Activated B cell treated with CpG ODN at 0.5 μM for 24 hours (primary cell): ENCODE measurements at regions of chr10 and their contacts with region 1.

Region 1: DNA sequence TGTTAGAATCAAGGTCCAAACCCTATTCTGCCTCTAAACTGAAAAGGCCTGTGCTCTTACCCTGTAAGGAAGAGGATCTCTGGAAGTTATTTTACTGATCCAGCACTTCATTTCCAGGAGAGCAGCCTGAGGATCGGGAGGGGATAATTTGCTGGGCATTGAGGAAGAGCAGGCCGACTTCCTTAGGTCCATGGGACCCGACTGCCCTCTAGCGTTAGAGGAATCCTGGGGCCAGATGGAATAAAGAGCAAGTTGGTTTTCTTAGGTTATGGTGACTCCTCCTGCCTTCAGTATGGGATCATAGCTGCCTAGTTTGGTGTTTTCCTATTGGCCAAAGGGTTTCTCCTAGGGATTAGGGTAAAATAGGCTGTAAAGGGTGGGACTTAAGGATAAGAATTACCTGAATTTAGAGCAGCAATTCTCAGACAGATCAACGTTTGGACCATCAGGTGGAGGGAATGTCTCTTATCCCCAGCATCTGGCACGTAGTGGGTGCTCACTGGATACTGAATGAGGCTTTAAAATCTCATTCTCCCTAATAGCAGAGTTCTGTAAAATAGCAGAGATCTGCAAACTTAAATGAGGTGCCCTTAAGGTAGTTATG is 40.0 kb upstream of the SORBS1 start:
- DNase-seq: no peak
- ATAC-seq: no peak
- H3K4me3 Mint-ChIP-seq: no peak overlapping the region
- H3K27ac Mint-ChIP-seq: no peak overlapping the region
- H3K4me1 Mint-ChIP-seq: no peaks in the 10 kb centered on the region
- H3K27me3 Mint-ChIP-seq: peaks cover 1% of the 10 kb centered on the region
- CTCF ChIP-seq: no peak

Region 2: GRCh38 chr10:94630017-94630688 is 971.1 kb before region 1 on chr10:
- CTCF ChIA-PET with region 1: no interaction called
- POLR2A ChIA-PET with region 1: no interaction called
- intact Hi-C with region 1: loop called (anchors 2 kb)
- DNase-seq: no peak
- ATAC-seq: no peak
- H3K4me3 Mint-ChIP-seq: no peak overlapping the region
- H3K27ac Mint-ChIP-seq: no peak overlapping the region
- H3K4me1 Mint-ChIP-seq: no peaks in the 10 kb centered on the region
- H3K27me3 Mint-ChIP-seq: no peaks in the 10 kb centered on the region
- CTCF ChIP-seq: peak; percentile 77

Region 3: DNA sequence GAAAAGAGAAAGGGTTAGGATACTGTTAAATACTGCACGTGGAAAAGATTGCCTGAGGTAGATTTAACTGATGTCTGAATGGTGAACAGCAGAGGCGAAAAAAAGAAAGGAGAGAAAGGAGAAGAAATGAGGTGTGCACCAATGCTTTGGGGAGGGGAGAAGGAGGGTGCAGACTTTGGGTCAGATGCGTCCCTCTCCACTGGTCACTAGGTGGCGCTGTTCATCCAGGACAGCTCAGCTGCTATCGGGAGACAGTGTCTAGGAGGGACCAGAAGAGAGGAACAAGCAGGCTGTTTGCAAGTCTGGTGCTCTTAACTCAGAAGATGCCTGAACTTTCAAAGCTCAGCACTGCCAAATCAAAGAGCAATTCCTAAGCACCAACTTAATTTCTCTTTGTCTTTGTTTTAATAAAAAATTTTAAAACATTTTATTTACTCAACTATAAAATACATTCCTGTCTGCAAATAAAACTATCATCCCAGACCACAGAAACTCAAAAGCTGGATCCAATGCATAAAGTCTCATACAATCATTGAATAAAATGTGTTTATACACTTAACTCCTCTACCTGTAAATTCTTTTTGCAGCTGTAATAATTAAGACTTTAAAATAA is 226.5 kb before region 1 on chr10:
- CTCF ChIA-PET with region 1: no interaction called
- POLR2A ChIA-PET with region 1: no interaction called
- intact Hi-C with region 1: loop called (anchors 1 kb)
- DNase-seq: no peak
- ATAC-seq: peak; percentile 64
- H3K4me3 Mint-ChIP-seq: no peak overlapping the region
- H3K27ac Mint-ChIP-seq: no peak overlapping the region
- H3K4me1 Mint-ChIP-seq: no peaks in the 10 kb centered on the region
- H3K27me3 Mint-ChIP-seq: peaks cover 38% of the 10 kb centered on the region
- CTCF ChIP-seq: no peak

Region 4: DNA sequence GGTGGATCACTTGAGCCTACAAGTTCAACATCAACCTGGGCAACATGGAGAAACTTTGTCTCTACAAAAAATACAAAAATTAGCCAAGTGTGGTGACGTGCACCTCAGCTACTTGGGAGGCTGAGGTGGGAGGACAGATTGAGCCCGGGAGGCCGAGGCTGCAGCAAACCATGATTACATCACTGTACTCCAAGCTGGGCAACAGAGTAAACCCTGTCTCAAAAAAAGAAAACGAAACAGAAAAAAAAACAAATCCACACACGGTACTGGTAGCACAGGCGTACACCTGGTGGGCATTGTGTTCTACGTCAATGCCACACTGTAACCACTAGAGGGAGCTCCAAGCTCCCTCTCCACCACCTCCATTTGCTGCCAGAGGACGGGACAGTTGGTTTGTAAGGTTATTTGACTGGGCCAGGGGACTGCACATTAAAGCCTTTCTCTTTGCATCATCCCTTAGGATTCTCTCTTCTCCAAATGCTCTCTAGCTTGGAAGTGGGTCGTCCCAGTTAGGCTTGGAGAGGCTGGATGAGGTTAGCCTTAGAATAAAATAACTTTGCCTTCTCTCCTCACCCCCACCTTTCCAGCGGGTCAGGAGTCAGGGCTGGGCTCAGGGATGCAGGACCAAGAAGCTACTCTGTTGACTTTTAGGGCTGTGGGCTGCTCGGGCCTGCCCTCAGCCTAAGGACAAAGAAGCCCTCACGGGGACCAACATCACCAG is 170.8 kb before region 1 on chr10:
- CTCF ChIA-PET with region 1: interaction called, 19 read pairs
- POLR2A ChIA-PET with region 1: no interaction called
- intact Hi-C with region 1: loop called (anchors 1 kb)
- DNase-seq: peak; percentile 24
- ATAC-seq: peak; percentile 93
- H3K4me3 Mint-ChIP-seq: no peak overlapping the region
- H3K27ac Mint-ChIP-seq: no peak overlapping the region
- H3K4me1 Mint-ChIP-seq: no peaks in the 10 kb centered on the region
- H3K27me3 Mint-ChIP-seq: peaks cover 9% of the 10 kb centered on the region
- CTCF ChIP-seq: no peak

Region 5: DNA sequence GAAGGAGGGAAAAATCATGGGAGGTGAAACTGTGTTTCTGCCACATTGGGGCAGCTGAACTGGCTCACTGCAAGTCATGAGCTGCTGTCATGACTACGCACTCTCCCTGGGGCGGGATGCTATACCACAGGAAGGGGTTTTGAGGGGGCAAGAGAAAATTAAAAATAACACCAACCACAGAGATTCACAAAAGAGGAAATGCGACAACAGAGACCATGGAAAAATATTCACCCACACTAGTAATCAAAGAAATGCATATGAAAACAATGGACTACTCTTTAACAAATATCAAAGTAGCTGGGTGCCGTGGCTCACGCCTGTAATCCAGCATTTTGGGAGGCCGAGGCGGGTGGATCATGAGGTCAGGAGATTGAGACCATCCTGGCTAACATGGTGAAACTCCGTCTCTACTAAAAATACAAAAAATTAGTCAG is 1050.8 kb after region 1 on chr10:
- CTCF ChIA-PET with region 1: no interaction called
- POLR2A ChIA-PET with region 1: no interaction called
- intact Hi-C with region 1: no loop called
- DNase-seq: peak; percentile 42
- ATAC-seq: peak; percentile 85
- H3K4me3 Mint-ChIP-seq: peak overlapping the region; percentile 60
- H3K27ac Mint-ChIP-seq: peak overlapping the region; percentile 89
- H3K4me1 Mint-ChIP-seq: peaks cover 87% of the 10 kb centered on the region
- H3K27me3 Mint-ChIP-seq: no peaks in the 10 kb centered on the region
- CTCF ChIP-seq: no peak